ENCODE measurements at regions of chr3 and their contacts with region 1.

Region 1: DNA sequence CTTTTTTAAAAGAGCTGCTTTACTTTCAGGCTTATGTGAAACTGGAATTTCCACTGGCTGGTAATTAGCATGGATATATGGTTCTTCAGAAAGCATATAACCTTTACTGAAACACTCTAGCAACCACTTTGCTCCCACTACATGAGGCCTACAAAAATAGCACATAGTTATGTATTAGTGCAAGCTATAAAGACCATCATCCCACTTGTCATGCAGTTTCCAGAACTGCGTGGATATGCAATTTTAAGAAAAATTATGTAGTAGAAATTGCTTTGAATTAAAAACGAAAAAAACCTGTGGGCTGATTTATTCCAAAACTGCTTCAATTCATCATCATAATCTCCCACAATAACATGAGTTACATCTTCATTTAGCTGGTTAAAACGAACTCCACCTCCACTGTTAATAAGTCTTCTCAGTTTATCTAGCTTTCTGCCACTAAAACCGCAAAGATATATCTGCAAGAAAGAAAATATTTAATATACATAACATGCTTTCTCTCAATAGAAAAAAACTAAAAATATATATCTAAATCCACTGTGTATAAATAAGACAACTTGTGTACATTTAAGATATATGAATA is 12.2 kb downstream of the TOPBP1 start:
- DNase-seq: no peak
- H3K4me3 ChIP-seq: no peak overlapping the region
- H3K27ac ChIP-seq: no peak overlapping the region
- H3K27me3 ChIP-seq: no peaks in the 10 kb centered on the region
- CTCF ChIP-seq: no peak

Region 2: GRCh38 chr3:133457465-133458067 is 192.0 kb before region 1 on chr3:
- intact Hi-C with region 1: loop called in 1 of 2 experiments (anchors 10 kb)
- DNase-seq: no peak
- H3K4me3 ChIP-seq: no peak overlapping the region
- H3K27ac ChIP-seq: no peak overlapping the region
- H3K27me3 ChIP-seq: no peaks in the 10 kb centered on the region
- CTCF ChIP-seq: peak in 2 of 56 donors; percentile 18 to 24

Region 3: DNA sequence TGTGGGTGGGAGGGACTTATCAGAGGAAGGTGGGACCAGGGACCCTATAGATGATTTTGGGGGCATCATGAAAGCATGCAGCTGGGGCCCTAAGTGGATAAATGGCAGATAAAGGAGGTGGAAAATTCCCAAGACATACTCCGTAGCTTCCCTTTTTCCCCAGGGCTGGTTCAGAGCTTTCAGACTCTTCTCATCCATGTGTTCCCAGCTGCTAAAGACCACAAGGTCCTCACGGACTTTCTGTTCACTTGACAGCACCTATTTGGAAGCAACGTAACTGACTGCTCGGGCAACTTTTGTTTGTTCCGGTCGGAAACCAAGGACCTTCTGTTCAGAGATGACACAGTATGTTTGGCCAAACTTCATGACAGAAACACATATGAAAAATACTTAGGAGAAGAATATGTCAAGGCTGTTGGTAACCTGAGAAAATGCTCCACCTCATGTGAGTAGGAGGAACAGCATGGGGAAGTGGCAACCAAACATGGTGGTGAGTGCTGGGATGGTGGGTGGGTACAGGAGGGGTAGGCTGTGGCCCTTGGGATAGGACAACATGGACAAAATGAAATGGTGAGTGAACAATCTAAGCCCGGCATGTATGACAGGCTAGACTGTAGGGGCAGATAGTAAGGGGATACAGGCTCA is 127.3 kb after region 1 on chr3:
- intact Hi-C with region 1: no loop called
- DNase-seq: no peak
- H3K4me3 ChIP-seq: no peak overlapping the region
- H3K27ac ChIP-seq: peak overlapping the region in 1 of 59 donors; percentile 12
- H3K27me3 ChIP-seq: no peaks in the 10 kb centered on the region
- CTCF ChIP-seq: no peak

Measured in dorsolateral prefrontal cortex (tissue), 120 donors.